Esophagus muscularis mucosa (tissue), 4 donors: ENCODE measurements at regions of chr17 and their contacts with region 1.

Region 1: DNA sequence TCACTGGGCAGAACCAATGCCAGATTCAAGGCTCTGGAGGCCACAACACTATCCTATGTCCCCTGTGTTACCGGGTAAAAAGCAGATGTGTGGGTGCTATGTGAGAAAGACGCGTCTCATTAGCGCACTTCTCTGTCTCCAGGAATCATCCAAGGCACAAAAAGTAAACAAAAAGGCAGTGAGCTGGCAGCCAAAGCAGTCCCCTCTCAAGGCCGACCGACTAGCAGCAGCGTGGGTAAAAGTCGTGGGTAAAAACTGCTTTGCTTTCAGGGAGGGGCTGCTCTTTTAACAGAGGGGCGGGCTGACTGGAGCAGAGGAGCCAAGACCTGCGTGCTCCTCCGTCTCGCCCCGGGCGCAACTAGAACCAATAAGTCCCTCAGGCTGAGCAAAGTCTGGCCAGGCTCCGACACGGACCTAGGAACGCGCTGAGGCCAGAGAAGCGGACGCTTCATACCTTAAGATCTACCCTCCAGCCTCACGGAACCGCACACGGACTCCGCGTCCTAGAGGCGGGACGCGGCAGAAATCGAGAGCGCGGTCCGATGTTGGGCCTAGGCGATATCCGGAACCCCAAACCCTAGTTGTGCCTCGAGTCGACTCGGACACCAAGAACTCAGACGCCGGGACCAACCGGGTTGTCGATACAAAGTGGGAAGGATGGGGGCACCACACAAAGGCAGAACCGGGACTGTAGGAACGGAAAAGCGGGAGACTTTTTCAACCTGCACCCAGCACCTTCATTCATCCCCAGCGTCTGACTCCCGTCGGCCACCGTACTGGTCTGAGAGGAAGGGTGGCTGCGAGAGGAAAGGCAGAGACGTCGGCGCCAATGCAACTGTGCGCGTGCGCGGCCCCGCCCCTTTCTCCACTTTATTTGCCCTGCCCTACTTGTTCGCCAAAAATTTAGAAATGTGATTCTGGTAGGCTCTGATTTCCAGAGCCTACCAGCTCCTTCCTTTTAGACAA is at the start of gene INTS2:
- DNase-seq: peak; percentile 99
- H3K4me3 ChIP-seq: peak within 1 kb of the TSS; percentile 68 to 83 (median 70)
- H3K27ac ChIP-seq: peak within 1 kb of the TSS; percentile 80 to 92 (median 85)
- H3K4me1 ChIP-seq: peaks cover 13 to 25% (median 22%) of the 10 kb centered on the region in 4 donors
- H3K27me3 ChIP-seq: no peaks in the 10 kb centered on the region
- CTCF ChIP-seq: peak in 1 of 3 experiments; percentile 4
- EP300 ChIP-seq: no peak
- POLR2A ChIP-seq: peak; percentile 63
- total RNA-seq, gene INTS2: 10.1 to 15.4 (median 11.4) TPM

Region 2: DNA sequence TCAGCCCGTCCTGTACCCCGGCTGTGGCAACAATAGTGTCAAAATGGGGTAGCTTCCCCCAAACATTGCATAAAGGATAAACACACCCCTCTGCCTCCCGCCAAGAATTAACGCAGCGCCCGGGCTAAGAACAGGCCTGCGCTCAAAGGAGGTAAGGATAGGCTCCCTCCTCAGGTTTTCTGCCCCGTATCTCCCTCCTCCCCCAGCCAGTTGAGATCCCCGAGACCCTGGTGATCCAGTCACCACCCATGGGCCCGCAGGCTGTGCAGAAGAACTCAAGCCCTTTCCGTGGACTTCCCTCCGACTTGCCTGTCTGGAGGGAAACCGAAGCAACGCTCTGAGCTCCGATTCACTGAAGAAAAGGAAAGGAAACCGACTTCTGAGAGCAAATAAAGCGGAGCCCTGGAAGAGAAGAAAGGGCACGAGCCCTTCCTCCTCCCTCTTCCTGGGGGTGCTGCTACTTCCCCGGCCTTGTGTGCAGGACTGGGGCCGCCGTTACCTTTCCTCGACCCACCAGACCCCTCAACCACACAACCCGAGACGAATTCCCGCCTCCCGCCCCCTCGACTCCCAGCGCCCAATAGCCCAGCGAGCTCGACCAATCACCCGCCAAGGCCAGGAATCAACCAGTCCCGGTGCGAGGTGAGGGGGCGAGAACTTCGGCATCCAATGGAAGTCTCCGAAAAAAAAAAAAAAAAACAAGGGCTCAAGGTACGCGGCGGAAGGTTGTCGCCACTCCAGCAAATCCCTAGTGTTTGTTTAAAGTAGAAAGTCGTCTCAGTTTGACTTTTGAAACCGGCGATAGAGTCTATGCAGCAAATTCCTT is 64.3 kb before region 1 on chr17 and contains the start of gene BRIP1:
- intact Hi-C with region 1: loop called (anchors 5 kb)
- DNase-seq: peak; percentile 98
- H3K4me3 ChIP-seq: peak within 1 kb of the TSS; percentile 73 to 86 (median 74)
- H3K27ac ChIP-seq: peak within 1 kb of the TSS; percentile 77 to 88 (median 80)
- H3K4me1 ChIP-seq: peaks cover 4 to 14% (median 11%) of the 10 kb centered on the region in 4 donors
- H3K27me3 ChIP-seq: no peaks in the 10 kb centered on the region
- CTCF ChIP-seq: peak in 1 of 3 experiments; percentile 3
- EP300 ChIP-seq: no peak
- POLR2A ChIP-seq: no peak
- total RNA-seq, gene BRIP1: 0.13 to 0.42 (median 0.31) TPM

Region 3: DNA sequence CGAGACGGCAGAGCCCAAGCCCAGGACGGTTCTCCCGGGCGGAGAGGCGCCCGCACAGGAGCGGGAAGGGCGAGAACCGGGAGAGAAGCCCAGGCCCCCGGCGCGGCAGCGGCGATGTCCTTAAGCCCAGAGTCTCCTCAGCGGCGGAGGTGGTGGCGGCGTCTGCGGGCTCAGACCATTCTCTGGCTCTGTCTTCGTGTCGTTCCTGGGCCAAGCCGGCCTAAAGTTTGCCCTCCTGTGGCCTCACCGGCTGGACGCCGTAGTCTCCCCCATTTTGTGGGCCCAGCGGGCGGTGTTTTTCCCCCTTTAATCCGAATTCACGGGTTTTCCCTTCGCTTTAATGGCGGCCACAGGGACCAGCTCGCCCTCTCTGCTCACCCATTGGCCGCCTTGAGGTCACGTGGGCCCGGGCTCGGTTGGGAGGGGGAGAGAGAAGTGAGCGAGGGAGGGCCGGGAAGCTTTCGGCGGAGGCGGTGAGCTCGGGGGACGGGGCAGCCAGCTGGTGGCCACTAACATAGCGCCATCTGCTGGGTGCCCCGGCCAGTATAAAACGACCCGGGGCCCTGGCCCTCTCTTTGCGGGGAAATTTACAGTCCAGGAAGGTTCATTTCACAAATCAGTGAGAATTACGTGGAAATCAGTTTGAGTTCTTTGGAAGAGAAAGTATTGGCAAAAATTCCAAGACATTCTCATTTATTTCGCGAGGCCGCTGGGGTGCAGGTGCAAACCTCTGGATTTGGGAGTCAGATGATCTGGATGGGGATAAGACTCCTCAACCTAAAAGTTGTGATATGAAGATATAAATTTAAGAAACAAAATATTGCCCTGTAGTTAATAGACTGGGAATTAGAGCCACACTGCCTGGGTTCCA is 138.3 kb after region 1 on chr17:
- intact Hi-C with region 1: loop called (anchors 5 kb)
- DNase-seq: peak; percentile 100
- H3K4me3 ChIP-seq: peak overlapping the region; percentile 84 to 89 (median 88)
- H3K27ac ChIP-seq: peak overlapping the region; percentile 95 to 99 (median 98)
- H3K4me1 ChIP-seq: peaks cover 24 to 41% (median 32%) of the 10 kb centered on the region in 4 donors
- H3K27me3 ChIP-seq: no peaks in the 10 kb centered on the region
- CTCF ChIP-seq: peak; percentile 91 to 95 (median 92)
- EP300 ChIP-seq: no peak
- POLR2A ChIP-seq: no peak

Region 4: DNA sequence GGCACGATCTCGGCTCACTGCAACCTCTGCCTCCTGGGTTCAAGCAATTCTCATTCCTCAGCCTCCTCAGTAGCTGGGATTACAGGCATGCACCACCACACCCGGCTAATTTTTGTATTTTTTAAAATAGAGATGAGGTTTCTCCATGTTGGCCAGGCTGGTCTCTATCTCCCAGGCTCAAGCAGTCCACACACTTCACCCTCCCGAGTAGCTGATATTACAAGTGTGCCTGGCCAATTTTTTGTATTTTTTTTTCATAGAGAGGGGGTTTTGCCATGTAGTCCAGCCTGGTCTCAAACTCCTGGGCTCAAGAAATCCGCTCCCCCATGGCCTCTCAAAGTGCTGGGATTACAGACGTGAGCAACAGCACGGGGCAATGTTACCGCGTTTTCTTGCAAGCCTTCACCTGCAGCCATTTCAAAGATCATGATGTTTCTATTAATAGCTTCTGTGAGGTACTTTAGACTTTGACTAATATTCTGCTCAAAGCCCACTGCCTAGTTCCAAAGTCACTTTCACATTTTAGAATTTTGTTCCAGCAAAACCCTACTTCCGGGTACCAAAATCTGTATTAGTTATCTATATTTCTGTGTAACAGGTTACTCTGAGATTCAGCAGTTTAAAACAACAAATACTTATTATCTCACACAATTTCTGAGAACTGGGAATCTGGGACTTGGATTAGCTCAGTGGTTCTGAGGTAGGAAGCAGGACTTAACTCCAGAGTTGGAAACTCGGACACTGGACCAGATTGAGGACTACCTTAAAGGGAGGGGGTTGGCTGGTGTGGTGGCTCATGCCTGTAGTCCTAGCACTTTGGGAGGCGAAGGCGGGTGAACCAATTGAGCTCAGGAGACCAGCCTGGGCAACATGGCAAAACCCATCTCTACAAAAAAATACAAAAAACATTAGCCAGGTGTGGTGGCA is 149.6 kb after region 1 on chr17:
- intact Hi-C with region 1: no loop called
- DNase-seq: peak; percentile 50
- H3K4me3 ChIP-seq: no peak overlapping the region
- H3K27ac ChIP-seq: no peak overlapping the region
- H3K4me1 ChIP-seq: no peaks in the 10 kb centered on the region
- H3K27me3 ChIP-seq: peaks cover 0 to 2% (median 0%) of the 10 kb centered on the region in 4 donors
- CTCF ChIP-seq: no peak
- EP300 ChIP-seq: no peak
- POLR2A ChIP-seq: no peak